GM13976 (cell line): ENCODE measurements at regions of chr3 and their contacts with region 1.

Region 1: GRCh38 chr3:25594007-25594502 is 70.7 kb downstream of the TOP2B start:
- DNase-seq: no peak
- CTCF ChIP-seq: peak; percentile 50

Region 2: GRCh38 chr3:24963762-24964625 is 630.1 kb before region 1 on chr3:
- in situ Hi-C with region 1: loop called (anchors 25 kb)
- DNase-seq: no peak
- CTCF ChIP-seq: peak; percentile 37

Region 3: DNA sequence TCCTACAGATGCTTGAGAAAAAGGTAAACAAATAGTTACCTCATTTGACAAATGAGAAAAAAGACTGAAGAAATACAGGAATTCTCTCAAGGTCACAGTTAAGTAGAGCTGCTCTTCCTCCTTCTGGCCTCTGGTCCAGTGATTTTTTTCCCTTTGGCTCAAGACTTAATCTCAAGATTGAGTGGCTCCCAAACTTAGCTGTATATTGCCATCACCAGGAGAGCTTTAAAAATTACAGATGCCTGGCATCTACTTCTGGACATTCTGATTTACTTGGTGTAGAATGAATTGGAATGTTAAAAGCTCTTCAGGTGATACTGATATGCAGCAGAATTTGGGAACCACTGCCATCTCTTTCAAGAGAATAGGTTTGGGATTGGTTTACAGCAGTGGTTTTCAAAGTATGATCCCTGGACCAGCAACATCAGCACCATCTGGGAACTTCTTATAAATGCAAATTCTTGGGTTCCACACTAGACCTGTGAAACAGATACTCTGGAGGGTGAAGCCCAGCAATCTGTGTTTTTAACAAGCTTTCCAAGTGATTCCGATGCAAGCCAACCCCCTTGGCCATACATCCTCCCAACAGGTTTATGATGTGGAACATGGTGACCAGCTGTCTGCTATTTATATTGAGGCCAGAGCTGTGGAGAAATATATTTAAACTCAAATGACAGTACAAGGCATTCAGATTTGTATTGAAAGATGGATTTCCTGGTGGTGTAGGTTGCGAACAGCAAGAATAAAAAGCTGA is 498.9 kb before region 1 on chr3:
- in situ Hi-C with region 1: no loop called
- DNase-seq: no peak
- CTCF ChIP-seq: no peak